Thyroid gland (tissue), 4 donors: ENCODE measurements at regions of chr2 and their contacts with region 1.

Region 1: DNA sequence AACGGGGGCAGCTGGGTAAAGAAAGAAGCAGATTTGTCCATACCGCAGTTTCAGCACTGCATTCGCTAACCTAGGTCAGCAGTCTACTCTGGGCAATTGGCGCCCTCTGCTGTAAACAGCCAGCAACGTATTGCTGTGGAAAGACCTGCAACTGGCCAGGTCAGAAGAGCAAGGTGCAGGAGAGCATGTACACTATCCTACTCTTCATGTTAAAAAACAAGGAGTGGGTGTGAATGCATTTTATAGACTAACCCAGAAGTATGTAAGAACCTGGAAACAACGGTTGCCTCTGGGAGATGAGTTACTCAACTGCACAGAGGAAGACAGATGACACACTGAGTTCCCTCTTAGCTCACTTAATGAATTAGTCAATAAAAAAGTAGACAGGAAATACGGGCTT is 6.2 kb downstream of the MRPS5 start:
- DNase-seq: peak; percentile 78 to 81
- H3K4me3 ChIP-seq: no peak overlapping the region
- H3K27ac ChIP-seq: no peak overlapping the region
- H3K4me1 ChIP-seq: peaks cover 12 to 16% of the 10 kb centered on the region in 2 donors
- H3K27me3 ChIP-seq: no peaks in the 10 kb centered on the region
- CTCF ChIP-seq: peak; percentile 37 to 82 (median 73)
- POLR2A ChIP-seq: no peak

Region 2: GRCh38 chr2:94956797-94957391 is 158.5 kb before region 1 on chr2:
- intact Hi-C with region 1: no loop called
- DNase-seq: peak; percentile 24 to 31
- H3K4me3 ChIP-seq: no peak overlapping the region
- H3K27ac ChIP-seq: no peak overlapping the region
- H3K4me1 ChIP-seq: no peaks in the 10 kb centered on the region
- H3K27me3 ChIP-seq: no peaks in the 10 kb centered on the region
- CTCF ChIP-seq: peak; percentile 41 to 90 (median 61)
- POLR2A ChIP-seq: no peak

Region 3: DNA sequence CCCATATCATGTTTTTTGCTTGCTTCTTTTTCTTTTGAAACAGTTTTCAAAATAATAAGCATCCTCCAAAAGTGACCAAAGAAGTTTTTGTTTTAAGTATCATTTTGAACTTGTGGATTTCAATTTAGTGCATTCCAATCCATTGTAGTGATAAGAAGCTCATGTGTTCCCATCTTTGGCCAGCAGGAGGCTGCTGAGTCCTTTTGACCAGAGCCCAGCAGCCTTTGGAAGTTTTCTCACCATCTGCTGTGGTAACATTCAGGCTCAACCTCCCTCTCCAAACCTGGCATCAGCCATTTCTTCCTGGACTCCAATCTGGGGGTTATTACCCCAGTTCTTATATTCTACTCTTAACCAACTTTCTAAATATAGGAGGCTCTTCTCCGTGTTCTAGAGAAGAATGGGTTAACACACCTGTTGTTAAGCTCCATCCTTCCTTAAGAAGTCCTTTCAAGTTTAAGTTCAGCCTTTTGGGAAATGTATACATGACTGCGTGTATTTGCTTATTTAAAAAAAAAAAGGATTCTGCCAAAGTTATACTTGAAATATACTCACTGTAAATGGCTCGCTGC is 128.9 kb before region 1 on chr2:
- intact Hi-C with region 1: loop called (anchors 10 kb)
- DNase-seq: peak; percentile 83 to 85
- H3K4me3 ChIP-seq: no peak overlapping the region
- H3K27ac ChIP-seq: no peak overlapping the region
- H3K4me1 ChIP-seq: no peaks in the 10 kb centered on the region
- H3K27me3 ChIP-seq: no peaks in the 10 kb centered on the region
- CTCF ChIP-seq: peak in 5 of 6 experiments; percentile 68 to 88 (median 79)
- POLR2A ChIP-seq: no peak

Region 4: GRCh38 chr2:95022309-95023221 is 92.9 kb before region 1 on chr2:
- intact Hi-C with region 1: loop called (anchors 5 kb)
- DNase-seq: peak; percentile 80 to 83
- H3K4me3 ChIP-seq: no peak overlapping the region
- H3K27ac ChIP-seq: peak overlapping the region; percentile 89 to 98 (median 92)
- H3K4me1 ChIP-seq: peaks cover 28 to 58% of the 10 kb centered on the region in 2 donors
- H3K27me3 ChIP-seq: no peaks in the 10 kb centered on the region
- CTCF ChIP-seq: peak; percentile 77 to 97 (median 94)
- POLR2A ChIP-seq: no peak